Right ventricle myocardium inferior (tissue), 1 donor: ENCODE measurements at regions of chr6 and their contacts with region 1.

Region 1: DNA sequence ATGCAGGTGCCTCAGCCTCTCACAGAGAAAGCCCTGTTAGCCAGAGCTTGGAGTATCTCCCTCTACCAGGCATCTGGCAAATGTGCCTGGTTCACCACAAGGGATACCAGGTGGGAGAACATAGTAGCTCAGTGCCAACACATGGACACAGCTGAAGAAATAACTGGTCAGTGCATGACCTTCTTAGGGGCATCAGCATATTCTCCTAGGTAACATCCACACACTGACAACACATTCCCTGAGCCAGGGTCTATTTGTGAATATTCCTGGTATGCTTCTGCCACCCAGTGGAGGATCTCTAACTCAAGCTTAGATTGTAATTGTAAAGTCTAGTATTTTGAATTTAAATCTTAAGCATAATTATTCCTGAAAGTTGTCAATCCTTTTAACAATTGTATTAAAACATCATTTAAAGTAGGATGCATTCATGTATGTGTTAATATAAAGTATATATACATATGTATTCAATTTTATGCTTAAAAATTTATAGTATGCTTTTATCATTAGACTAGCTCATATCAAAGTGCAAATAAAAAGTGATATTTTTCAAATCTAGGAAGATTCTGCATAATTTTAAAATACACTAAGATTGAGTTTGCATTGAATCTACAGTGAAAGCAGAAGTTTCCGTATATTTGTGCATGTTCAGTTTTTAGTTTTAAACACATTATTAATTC is 45.3 kb upstream of the COL21A1 start:
- DNase-seq: no peak
- ATAC-seq: peak; percentile 70

Region 2: GRCh38 chr6:55276745-55277530 is 1015.7 kb before region 1 on chr6:
- intact Hi-C with region 1: loop called (anchors 2 kb)
- DNase-seq: peak; percentile 68
- ATAC-seq: peak; percentile 81

Region 3: GRCh38 chr6:55445648-55446204 is 846.9 kb before region 1 on chr6:
- intact Hi-C with region 1: loop called (anchors 10 kb)
- DNase-seq: no peak
- ATAC-seq: no peak

Region 4: GRCh38 chr6:55980627-55981211 is 311.9 kb before region 1 on chr6:
- intact Hi-C with region 1: loop called (anchors 1 kb)
- DNase-seq: no peak
- ATAC-seq: no peak

Region 5: DNA sequence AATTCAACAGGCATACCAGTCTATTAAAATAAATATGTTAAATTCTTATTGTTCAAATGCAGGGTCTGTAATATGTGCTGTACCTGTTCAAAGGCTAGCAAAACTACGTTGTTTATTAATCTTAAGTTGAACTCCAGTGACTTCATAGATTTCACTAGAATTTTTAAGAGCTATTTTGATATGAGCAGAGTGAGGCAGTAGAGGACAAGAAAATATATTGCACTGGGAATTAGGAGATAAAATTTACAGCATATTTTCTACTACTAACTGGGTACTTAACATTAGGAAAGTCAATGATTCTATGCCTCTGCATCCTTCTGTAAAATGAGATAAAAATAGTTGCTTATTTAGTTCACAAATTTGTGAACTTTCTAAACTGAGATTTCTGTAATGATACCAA is 255.0 kb before region 1 on chr6:
- intact Hi-C with region 1: loop called (anchors 5 kb)
- DNase-seq: no peak
- ATAC-seq: no peak

Region 6: GRCh38 chr6:56359201-56359899 is 66.7 kb after region 1 on chr6:
- intact Hi-C with region 1: no loop called
- DNase-seq: no peak
- ATAC-seq: peak; percentile 77